ENCODE measurements at regions of chr22 and their contacts with region 1.

Region 1: DNA sequence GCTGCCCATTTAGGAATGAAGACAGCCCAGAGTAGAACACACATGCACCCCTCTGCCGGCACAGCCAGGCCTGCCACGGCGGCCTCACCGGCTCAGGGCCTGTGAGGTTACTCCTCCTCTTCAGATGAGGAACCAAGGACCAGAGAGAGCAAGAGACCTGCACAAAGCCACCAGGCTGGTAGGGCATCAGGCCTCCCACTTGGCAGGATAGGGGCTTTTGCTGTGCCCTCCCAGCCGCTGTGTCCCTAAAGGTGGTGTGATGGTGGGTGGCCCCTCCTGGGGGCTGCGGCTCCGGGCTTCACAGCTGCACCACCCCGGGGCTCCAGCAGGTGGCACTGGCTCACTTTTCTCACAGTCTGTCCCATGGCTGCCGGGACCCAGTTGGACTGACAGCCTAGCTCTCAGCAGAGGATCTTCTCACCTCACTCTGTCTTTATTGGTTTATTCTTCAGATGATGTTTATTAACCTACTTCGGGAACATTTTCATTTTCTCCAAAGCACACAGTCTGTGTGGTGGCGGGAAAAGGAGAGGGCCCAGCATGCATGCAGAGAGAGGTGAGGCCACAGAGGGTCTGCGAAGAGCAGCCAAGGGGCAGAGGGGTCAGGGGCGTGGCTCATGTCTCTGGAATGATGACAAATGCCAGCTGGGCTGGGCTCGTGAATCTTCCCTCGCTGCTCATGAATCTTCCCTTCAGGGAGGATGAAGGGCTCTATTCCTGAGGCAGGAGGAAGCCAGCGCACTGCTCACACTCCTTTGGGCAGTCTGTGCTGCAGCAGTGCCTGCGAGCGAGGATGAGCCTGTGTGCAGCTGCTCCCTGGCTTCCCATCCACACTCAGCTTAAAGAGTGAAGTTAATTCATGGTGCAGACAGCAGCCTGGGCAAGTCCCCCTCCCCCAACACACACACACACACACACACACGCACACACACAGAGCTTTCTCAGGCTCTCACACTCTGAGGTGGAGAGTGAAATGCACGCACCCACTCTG is 101.1 kb upstream of the PITPNB start:
- DNase-seq: peak; percentile 64
- H3K4me3 ChIP-seq: no peak overlapping the region
- H3K27ac ChIP-seq: no peak overlapping the region
- H3K4me1 ChIP-seq: no peaks in the 10 kb centered on the region
- H3K27me3 ChIP-seq: no peaks in the 10 kb centered on the region
- CTCF ChIP-seq: peak; percentile 89 to 93 (median 92)
- POLR2A ChIP-seq: no peak

Region 2: GRCh38 chr22:28064920-28065319 is 44.7 kb after region 1 on chr22:
- intact Hi-C with region 1: loop called (anchors 5 kb)
- DNase-seq: no peak
- H3K4me3 ChIP-seq: no peak overlapping the region
- H3K27ac ChIP-seq: no peak overlapping the region
- H3K4me1 ChIP-seq: no peaks in the 10 kb centered on the region
- H3K27me3 ChIP-seq: no peaks in the 10 kb centered on the region
- CTCF ChIP-seq: no peak
- POLR2A ChIP-seq: no peak

Region 3: DNA sequence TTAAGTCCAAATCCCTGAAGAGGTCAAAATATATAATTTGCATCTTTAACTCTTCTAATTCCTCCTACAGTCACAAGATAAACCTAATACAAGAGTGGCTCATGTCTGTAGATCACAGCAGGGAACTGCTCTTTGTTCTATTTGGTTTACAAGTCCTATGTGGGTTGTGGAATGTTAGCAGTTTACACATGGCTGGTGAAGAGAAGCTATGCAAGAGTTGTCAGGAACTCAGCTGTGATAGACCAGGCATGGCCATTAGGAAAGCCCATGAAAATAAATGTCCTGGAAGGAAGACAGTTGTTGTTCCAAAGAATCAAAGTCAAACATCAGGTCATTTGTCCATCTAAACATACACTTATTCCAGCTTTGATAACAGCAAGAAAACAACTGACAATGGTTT is 211.3 kb after region 1 on chr22:
- intact Hi-C with region 1: no loop called
- DNase-seq: no peak
- H3K4me3 ChIP-seq: no peak overlapping the region
- H3K27ac ChIP-seq: no peak overlapping the region
- H3K4me1 ChIP-seq: no peaks in the 10 kb centered on the region
- H3K27me3 ChIP-seq: no peaks in the 10 kb centered on the region
- CTCF ChIP-seq: no peak
- POLR2A ChIP-seq: no peak

Region 4: GRCh38 chr22:28332410-28332809 is 312.2 kb after region 1 on chr22:
- intact Hi-C with region 1: no loop called
- DNase-seq: no peak
- H3K4me3 ChIP-seq: no peak overlapping the region
- H3K27ac ChIP-seq: no peak overlapping the region
- H3K4me1 ChIP-seq: no peaks in the 10 kb centered on the region
- H3K27me3 ChIP-seq: no peaks in the 10 kb centered on the region
- CTCF ChIP-seq: no peak
- POLR2A ChIP-seq: no peak

Region 5: DNA sequence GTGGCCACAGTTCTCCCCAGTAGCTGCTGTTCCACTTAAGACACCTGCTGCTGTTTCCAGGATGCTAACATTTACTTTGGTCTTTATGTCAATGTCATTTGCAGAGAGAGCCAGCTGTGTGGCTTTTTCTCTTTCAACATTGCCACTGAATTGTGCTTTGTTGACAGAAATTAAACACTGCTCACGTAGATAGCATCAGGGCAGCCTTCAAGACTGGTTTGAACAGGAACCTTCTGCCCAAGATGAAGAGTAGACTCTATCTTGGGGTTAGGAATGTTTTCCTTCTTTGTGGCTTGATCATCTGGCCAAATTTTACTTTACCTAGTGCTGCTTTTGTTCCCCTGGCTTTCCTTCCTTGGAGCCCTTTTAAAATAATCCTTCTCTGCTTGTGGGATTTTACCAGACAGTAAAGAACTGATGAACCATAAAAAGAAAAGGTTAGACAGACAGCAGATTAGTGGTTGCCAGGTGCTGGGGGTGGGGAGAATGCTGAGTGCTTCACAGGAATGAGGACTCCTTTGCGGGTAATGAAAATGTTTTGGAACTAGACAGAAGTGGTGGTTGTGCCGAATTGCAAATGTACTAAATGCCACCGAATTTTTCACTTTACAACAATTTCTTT is 802.9 kb after region 1 on chr22:
- intact Hi-C with region 1: loop called (anchors 5 kb)
- DNase-seq: peak; percentile 90
- H3K4me3 ChIP-seq: no peak overlapping the region
- H3K27ac ChIP-seq: peak overlapping the region; percentile 79 to 83
- H3K4me1 ChIP-seq: peaks cover 23% of the 10 kb centered on the region
- H3K27me3 ChIP-seq: no peaks in the 10 kb centered on the region
- CTCF ChIP-seq: no peak
- POLR2A ChIP-seq: no peak

Measured in prostate gland (tissue), 2 donors.